Panc1 (cell line): ENCODE measurements at regions of chr3 and their contacts with region 1.

Region 1: GRCh38 chr3:93981649-93982048 is 1.7 kb downstream of the ARL13B start:
- DNase-seq: no peak
- ATAC-seq: no peak
- H3K4me3 ChIP-seq: peak overlapping the region in 1 of 2 experiments; percentile 82; a peak in 2 of 4 replicates
- H3K27ac ChIP-seq: peak overlapping the region; percentile 81; the same call in 1 of the 2 replicates
- H3K4me1 ChIP-seq: peaks cover 9% of the 10 kb centered on the region; the same call in 1 of the 2 replicates
- H3K27me3 ChIP-seq: no peaks in the 10 kb centered on the region
- CTCF ChIP-seq: no peak

Region 2: GRCh38 chr3:94015025-94015424 is 33.4 kb after region 1 on chr3:
- CTCF ChIA-PET with region 1: no interaction called
- POLR2A ChIA-PET with region 1: interaction called, 15 read pairs
- in situ Hi-C with region 1: no loop called
- intact Hi-C with region 1: no loop called
- DNase-seq: no peak
- ATAC-seq: no peak
- H3K4me3 ChIP-seq: no peak overlapping the region
- H3K27ac ChIP-seq: no peak overlapping the region
- H3K4me1 ChIP-seq: no peaks in the 10 kb centered on the region
- H3K27me3 ChIP-seq: no peaks in the 10 kb centered on the region
- CTCF ChIP-seq: no peak

Region 3: GRCh38 chr3:94092086-94092485 is 110.4 kb after region 1 on chr3:
- CTCF ChIA-PET with region 1: no interaction called
- POLR2A ChIA-PET with region 1: no interaction called
- in situ Hi-C with region 1: no loop called
- intact Hi-C with region 1: no loop called
- DNase-seq: no peak
- ATAC-seq: no peak
- H3K4me3 ChIP-seq: no peak overlapping the region
- H3K27ac ChIP-seq: no peak overlapping the region
- H3K4me1 ChIP-seq: no peaks in the 10 kb centered on the region
- H3K27me3 ChIP-seq: no peaks in the 10 kb centered on the region
- CTCF ChIP-seq: no peak

Region 4: DNA sequence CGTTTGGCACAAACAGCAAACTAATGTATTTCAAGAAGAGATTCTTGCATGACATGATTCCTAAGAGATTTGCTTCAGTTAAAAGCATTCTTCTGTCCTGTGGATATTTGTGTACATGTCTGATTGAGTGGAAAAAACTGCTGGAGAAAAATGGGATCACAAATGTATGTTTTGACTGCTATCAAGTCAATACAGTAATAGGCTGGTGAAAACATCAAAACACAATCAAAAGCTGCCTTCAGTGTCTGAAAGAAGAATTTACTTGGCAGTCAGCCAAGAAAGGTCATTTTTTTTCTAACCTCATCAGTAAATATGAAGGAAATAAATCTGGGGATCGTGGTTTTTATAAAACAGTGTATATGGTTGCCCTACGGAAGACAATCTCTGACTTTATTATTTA is 1296.0 kb after region 1 on chr3:
- CTCF ChIA-PET with region 1: no interaction called
- POLR2A ChIA-PET with region 1: interaction called, 15 read pairs
- in situ Hi-C with region 1: no loop called
- intact Hi-C with region 1: no loop called
- DNase-seq: no peak
- ATAC-seq: no peak
- H3K4me3 ChIP-seq: no peak overlapping the region
- H3K27ac ChIP-seq: no peak overlapping the region
- H3K4me1 ChIP-seq: no peaks in the 10 kb centered on the region
- H3K27me3 ChIP-seq: no peaks in the 10 kb centered on the region
- CTCF ChIP-seq: no peak